ENCODE measurements at regions of chr19 and their contacts with region 1.

Region 1: DNA sequence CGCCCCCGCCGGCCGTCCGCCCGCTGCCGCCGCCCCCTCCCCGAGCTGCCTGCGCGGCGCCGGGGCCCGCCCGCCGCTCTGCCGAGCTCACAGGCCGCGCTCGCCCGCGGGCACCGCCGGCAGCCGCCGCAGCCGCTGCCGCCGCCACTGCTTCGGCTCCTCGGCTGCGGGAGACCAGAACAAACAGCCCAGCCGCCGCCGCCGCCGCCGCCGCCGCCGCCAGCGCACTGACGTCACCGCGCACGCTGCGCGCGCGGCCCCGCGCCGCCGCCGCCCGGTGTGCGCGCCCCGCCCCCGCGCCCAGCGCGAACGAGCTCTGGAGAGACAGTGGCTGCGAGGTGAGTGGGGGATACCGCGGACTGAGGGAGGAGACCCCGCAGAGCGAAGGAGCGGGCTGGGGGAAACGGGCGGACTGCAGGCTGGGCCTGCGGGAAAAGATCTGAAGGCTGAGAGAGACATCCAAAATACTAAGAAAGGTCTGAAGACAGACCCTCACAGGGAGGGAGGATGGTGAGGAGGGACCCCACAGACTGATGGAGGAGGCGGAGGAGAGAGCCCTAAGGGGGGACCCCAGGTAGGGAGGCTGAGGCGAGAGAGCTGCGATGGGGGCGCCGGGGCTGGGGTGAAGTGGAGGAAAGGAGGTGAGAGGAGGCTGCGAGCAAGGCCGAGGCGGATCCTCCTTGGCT is at the start of gene BRD4:
- DNase-seq: peak; percentile 89

Region 2: GRCh38 chr19:15379083-15379995 is 46.9 kb after region 1 on chr19 and contains the start of gene AKAP8:
- CTCF ChIA-PET with region 1: no interaction called
- POLR2A ChIA-PET with region 1: interaction called, 12 read pairs
- DNase-seq: peak; percentile 99